Colonic mucosa (tissue), 4 donors: ENCODE measurements at regions of chr20 and their contacts with region 1.

Region 1: GRCh38 chr20:549722-550496 is 6.3 kb upstream of the CSNK2A1 start:
- DNase-seq: no peak
- H3K4me3 ChIP-seq: no peak overlapping the region
- H3K27ac ChIP-seq: no peak overlapping the region
- H3K4me1 ChIP-seq: no peaks in the 10 kb centered on the region
- H3K27me3 ChIP-seq: no peaks in the 10 kb centered on the region
- CTCF ChIP-seq: no peak

Region 2: DNA sequence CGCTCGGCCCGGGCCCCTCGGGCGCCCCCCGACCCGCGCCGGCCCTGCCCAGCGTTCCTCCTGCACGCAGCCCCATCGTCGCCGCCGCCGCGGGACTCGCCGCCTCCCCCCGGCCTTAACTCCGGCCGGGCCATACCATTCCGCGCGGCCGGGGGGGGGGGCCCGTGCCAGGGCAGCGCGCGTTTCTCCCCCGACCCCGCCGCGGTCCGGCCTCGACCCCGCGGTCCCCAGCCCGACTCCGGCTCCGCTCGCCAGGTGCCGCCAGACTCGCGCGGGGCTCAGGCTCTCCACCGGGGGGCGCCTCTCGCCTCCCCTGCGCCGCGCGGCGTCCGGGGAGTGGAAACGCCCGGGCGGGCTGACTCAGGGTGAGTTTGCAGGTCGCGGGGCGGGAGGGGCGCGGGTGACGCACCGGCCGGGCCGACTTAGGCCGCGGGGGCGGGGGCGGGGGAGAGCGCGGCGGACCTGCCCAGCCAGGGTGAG is 103.2 kb after region 1 on chr20 and contains the start of gene SRXN1:
- intact Hi-C with region 1: loop called (anchors 5 kb)
- DNase-seq: peak; percentile 89
- H3K4me3 ChIP-seq: peak within 1 kb of the TSS; percentile 65
- H3K27ac ChIP-seq: peak within 1 kb of the TSS; percentile 57
- H3K4me1 ChIP-seq: no peaks in the 10 kb centered on the region
- H3K27me3 ChIP-seq: no peaks in the 10 kb centered on the region
- CTCF ChIP-seq: peak; percentile 44
- total RNA-seq, gene SRXN1: 20.8 to 25.3 TPM